ENCODE measurements at regions of chr1 and their contacts with region 1.

Region 1: GRCh38 chr1:6409053-6409452 is 10.7 kb downstream of the HES2 start:
- DNase-seq: no peak
- ATAC-seq: no peak
- H3K4me3 ChIP-seq: no peak overlapping the region
- H3K27ac ChIP-seq: no peak overlapping the region
- H3K4me1 ChIP-seq: peaks cover under 1% of the 10 kb centered on the region
- H3K27me3 ChIP-seq: no peaks in the 10 kb centered on the region
- CTCF ChIP-seq: no peak
- POLR2A ChIP-seq: no peak

Region 2: GRCh38 chr1:6294615-6295556 is 114.2 kb before region 1 on chr1:
- intact Hi-C with region 1: no loop called
- DNase-seq: no peak
- ATAC-seq: no peak
- H3K4me3 ChIP-seq: no peak overlapping the region
- H3K27ac ChIP-seq: no peak overlapping the region
- H3K4me1 ChIP-seq: no peaks in the 10 kb centered on the region
- H3K27me3 ChIP-seq: no peaks in the 10 kb centered on the region
- CTCF ChIP-seq: no peak
- POLR2A ChIP-seq: no peak

Region 3: DNA sequence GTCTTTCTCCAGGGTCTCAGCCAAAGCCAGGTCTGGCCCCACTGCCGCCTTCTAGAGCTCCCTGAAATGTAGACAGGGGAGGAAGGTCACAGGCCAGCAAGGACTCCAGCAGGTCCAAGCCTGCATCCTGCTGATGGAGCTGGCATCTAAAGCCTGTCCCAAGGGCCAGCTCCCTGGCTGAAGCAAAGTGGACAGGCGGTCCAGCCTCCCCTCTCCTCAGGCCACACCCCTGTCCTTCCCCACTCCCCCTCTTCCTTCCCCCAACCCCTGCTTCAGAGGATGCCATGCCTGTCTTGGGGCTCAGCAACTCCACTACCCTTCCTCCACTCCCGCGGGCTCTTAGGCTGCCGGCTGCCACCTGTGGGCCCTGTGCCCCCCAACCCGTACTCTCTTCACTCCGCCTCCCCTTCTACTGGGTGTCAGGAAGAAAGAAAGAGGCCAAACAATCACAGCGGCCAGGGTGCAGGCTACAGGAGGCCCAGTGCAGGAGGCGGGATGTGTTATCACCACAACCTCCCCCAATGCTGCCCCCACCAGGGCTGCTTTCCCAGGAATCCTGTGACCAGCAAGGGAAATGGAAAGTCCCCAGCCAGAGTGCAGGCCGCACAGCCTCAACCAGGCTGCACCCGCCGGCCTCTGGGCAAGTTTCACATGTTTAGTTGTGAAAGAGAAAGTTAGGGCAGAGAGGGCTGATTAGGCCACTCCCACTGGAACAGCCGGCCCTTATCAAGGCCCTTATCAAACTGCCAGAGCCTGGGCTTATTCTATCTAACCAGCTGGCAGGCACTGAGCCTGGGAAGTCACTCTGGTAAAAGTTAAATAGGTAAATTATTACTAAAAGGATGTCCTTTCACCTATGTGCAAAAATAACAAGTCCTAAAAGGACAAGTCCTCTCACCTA is 49.6 kb before region 1 on chr1:
- intact Hi-C with region 1: loop called (anchors 5 kb)
- DNase-seq: peak; percentile 75 to 88 (median 82)
- ATAC-seq: peak; percentile 90
- H3K4me3 ChIP-seq: no peak overlapping the region
- H3K27ac ChIP-seq: peak overlapping the region; percentile 74 to 93 (median 88)
- H3K4me1 ChIP-seq: peaks cover 43% of the 10 kb centered on the region
- H3K27me3 ChIP-seq: no peaks in the 10 kb centered on the region
- CTCF ChIP-seq: no peak
- POLR2A ChIP-seq: peak in 2 of 3 donors; percentile 56 to 59